H1 (cell line): ENCODE measurements at regions of chr11 and their contacts with region 1.

Region 1: GRCh38 chr11:69101115-69101791 is 52.5 kb downstream of the TPCN2 start:
- DNase-seq: peak; percentile 60 to 96
- H3K4me3 ChIP-seq: no peak overlapping the region
- H3K27ac ChIP-seq: no peak overlapping the region
- H3K4me1 ChIP-seq: peaks cover 0 to 14% (median 4%) of the 10 kb centered on the region in 4 experiments; a peak in 4 of 7 replicates
- H3K27me3 ChIP-seq: no peaks in the 10 kb centered on the region
- CTCF ChIP-seq: peak in 2 of 3 experiments; percentile 96 to 100; a peak in 3 of 4 replicates
- EP300 ChIP-seq: no peak
- POLR2A ChIP-seq: no peak; a peak in 1 of 3 replicates
- RAD21 ChIP-seq: peak; percentile 99 to 100

Region 2: GRCh38 chr11:69003866-69004367 is 97.3 kb before region 1 on chr11:
- CTCF ChIA-PET with region 1: no interaction called
- POLR2A ChIA-PET with region 1: no interaction called
- DNase-seq: no peak
- H3K4me3 ChIP-seq: no peak overlapping the region
- H3K27ac ChIP-seq: no peak overlapping the region
- H3K4me1 ChIP-seq: peaks cover 0 to 3% (median 0%) of the 10 kb centered on the region in 4 experiments; a peak in 2 of 7 replicates
- H3K27me3 ChIP-seq: no peaks in the 10 kb centered on the region
- CTCF ChIP-seq: no peak
- EP300 ChIP-seq: no peak
- POLR2A ChIP-seq: no peak
- RAD21 ChIP-seq: no peak

Region 3: GRCh38 chr11:69088676-69089146 is 12.5 kb before region 1 on chr11:
- CTCF ChIA-PET with region 1: interaction called, 21 read pairs
- POLR2A ChIA-PET with region 1: interaction called, 5 read pairs
- DNase-seq: peak; percentile 70 to 89
- H3K4me3 ChIP-seq: no peak overlapping the region
- H3K27ac ChIP-seq: no peak overlapping the region
- H3K4me1 ChIP-seq: peaks cover 0 to 4% (median 0%) of the 10 kb centered on the region in 4 experiments; a peak in 2 of 7 replicates
- H3K27me3 ChIP-seq: no peaks in the 10 kb centered on the region
- CTCF ChIP-seq: peak in 2 of 3 experiments; percentile 87 to 93; a peak in 3 of 4 replicates
- EP300 ChIP-seq: no peak
- POLR2A ChIP-seq: no peak
- RAD21 ChIP-seq: peak; percentile 87 to 94

Region 4: DNA sequence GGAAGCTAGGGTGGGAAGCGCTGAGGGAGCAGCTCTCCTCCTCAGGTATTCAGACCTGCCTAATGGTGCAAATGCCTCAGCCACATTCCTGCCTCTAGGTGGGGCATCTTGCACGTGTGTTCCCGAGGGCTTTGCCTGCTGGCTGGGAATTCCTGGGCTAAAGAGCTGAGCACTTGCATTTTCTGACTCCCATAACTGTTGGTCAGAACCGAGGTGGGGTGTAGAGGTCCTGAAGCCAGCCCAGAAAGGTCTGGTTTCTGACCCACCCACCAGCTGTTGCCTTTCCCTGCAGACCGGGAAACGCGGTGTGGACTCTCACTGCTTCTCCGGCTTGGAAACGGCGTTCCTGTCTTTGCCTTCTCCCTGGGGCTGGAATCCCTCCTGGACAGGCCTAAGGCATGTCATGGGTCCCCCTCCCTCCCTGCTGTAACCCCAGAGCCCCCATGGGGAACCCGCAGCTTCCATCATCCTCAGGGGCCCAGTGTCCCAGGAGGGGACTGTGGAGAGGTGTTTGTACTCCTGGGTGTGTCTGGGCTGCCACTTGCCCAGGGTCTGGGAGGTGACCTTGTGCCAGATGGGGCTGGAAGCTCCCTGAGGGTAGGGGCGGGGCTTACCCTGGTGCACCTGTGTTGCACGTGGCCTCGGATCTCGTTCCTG is 30.5 kb after region 1 on chr11:
- CTCF ChIA-PET with region 1: interaction called, 13 read pairs
- POLR2A ChIA-PET with region 1: no interaction called
- DNase-seq: peak; percentile 81 to 89
- H3K4me3 ChIP-seq: no peak overlapping the region
- H3K27ac ChIP-seq: no peak overlapping the region
- H3K4me1 ChIP-seq: peaks cover 0 to 6% (median 2%) of the 10 kb centered on the region in 4 experiments; a peak in 4 of 7 replicates
- H3K27me3 ChIP-seq: no peaks in the 10 kb centered on the region; a peak in 1 of 7 replicates
- CTCF ChIP-seq: peak; percentile 91 to 98 (median 97)
- EP300 ChIP-seq: peak in 1 of 2 experiments; percentile 40; a peak in 1 of 3 replicates
- POLR2A ChIP-seq: no peak
- RAD21 ChIP-seq: peak; percentile 91

Region 5: DNA sequence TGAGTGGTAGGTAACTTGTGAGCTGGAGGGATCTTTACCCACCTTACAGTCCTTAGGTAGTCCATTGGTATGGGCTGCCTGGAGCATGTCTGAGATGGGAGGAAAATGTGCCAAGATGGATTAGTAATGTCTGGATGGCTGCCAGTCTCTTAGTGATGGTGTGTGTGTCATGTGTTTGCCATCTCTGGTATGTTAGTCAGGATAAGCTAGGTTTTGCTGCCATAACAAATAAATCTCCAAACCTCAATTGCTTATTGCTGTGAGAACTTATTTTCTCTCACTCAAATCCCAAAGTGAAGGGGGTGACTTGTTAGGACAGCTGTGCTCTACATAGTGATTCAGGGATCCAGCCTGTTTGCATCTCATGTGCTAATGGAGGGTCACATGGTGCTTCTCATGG is 151.8 kb after region 1 on chr11:
- CTCF ChIA-PET with region 1: interaction called, 12 read pairs
- POLR2A ChIA-PET with region 1: no interaction called
- DNase-seq: no peak
- H3K4me3 ChIP-seq: no peak overlapping the region
- H3K27ac ChIP-seq: no peak overlapping the region
- H3K4me1 ChIP-seq: peaks cover 11 to 22% (median 13%) of the 10 kb centered on the region in 4 experiments
- H3K27me3 ChIP-seq: peaks cover 0 to 15% (median 9%) of the 10 kb centered on the region in 4 experiments; a peak in 6 of 7 replicates
- CTCF ChIP-seq: no peak
- EP300 ChIP-seq: no peak
- POLR2A ChIP-seq: no peak
- RAD21 ChIP-seq: no peak

Region 6: GRCh38 chr11:69443138-69443967 is 342.1 kb after region 1 on chr11:
- CTCF ChIA-PET with region 1: interaction called, 18 read pairs
- POLR2A ChIA-PET with region 1: no interaction called
- DNase-seq: peak; percentile 70 to 91
- H3K4me3 ChIP-seq: peak overlapping the region in 1 of 4 experiments; percentile 38; a peak in 1 of 8 replicates
- H3K27ac ChIP-seq: 0 out of 2 replicates have a peak overlapping the region, but pooled peaks have one; percentile 3
- H3K4me1 ChIP-seq: peaks cover 13 to 37% (median 33%) of the 10 kb centered on the region in 4 experiments
- H3K27me3 ChIP-seq: no peaks in the 10 kb centered on the region; a peak in 2 of 7 replicates
- CTCF ChIP-seq: peak in 1 of 3 experiments; percentile 13; a peak in 1 of 4 replicates
- EP300 ChIP-seq: no peak
- POLR2A ChIP-seq: peak in 1 of 2 experiments; percentile 64; a peak in 1 of 3 replicates
- RAD21 ChIP-seq: peak in 1 of 2 experiments; percentile 0; a peak in 1 of 4 replicates

Region 7: DNA sequence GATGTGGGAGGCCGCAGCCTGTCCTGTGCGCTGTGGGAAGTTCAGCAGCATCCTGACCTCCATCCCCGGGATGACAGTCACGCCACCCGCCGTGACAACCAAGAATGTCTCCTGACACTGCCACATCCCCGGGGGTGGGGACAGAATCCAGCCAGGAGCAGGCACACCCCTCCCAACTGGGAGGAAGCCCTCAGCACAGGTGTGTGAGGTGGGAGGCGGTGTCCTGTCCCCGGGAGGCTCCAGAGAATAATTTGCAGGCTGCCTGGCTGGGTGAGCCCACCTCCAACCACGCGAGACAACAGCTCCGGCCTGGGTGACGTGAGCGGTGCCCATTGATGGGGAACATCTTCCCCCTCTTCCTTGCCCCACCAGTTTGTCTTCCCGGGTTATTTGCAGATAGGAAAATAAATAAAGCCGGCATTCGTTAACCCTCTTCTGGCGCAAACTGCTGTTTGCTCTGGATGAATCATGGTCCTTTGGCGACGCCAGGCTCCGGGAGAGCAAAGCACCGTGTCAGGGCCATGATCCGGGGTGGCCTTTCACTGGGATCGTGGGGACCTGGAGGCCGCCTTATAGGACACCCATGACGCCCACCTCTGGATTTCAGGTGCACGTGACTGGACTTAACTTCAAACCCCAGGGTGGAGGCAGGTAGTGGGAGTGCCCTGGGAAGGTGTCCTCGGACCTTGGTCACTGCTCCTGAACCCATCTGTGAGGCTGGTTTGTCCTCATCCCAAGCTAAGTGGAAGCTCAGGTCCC is 553.5 kb after region 1 on chr11:
- CTCF ChIA-PET with region 1: interaction called, 29 read pairs
- POLR2A ChIA-PET with region 1: no interaction called
- DNase-seq: no peak
- H3K4me3 ChIP-seq: no peak overlapping the region
- H3K27ac ChIP-seq: no peak overlapping the region
- H3K4me1 ChIP-seq: peaks cover 5 to 18% (median 13%) of the 10 kb centered on the region in 4 experiments
- H3K27me3 ChIP-seq: no peaks in the 10 kb centered on the region; a peak in 1 of 7 replicates
- CTCF ChIP-seq: no peak
- EP300 ChIP-seq: no peak
- POLR2A ChIP-seq: peak in 1 of 2 experiments; percentile 24; a peak in 1 of 3 replicates
- RAD21 ChIP-seq: no peak